ENCODE measurements at regions of chr11 and their contacts with region 1.

Region 1: GRCh38 chr11:130882138-130882551 is 34.1 kb downstream of the SNX19 start:
- DNase-seq: no peak
- H3K4me3 ChIP-seq: no peak overlapping the region
- H3K4me3 Mint-ChIP-seq: no peak overlapping the region
- H3K27ac ChIP-seq: no peak overlapping the region
- H3K27ac Mint-ChIP-seq: peak overlapping the region in 1 of 7 donors; percentile 82
- H3K4me1 ChIP-seq: no peaks in the 10 kb centered on the region
- H3K4me1 Mint-ChIP-seq: peaks cover 0 to 3% (median 0%) of the 10 kb centered on the region in 4 donors
- H3K27me3 ChIP-seq: no peaks in the 10 kb centered on the region
- H3K27me3 Mint-ChIP-seq: no peaks in the 10 kb centered on the region

Region 2: DNA sequence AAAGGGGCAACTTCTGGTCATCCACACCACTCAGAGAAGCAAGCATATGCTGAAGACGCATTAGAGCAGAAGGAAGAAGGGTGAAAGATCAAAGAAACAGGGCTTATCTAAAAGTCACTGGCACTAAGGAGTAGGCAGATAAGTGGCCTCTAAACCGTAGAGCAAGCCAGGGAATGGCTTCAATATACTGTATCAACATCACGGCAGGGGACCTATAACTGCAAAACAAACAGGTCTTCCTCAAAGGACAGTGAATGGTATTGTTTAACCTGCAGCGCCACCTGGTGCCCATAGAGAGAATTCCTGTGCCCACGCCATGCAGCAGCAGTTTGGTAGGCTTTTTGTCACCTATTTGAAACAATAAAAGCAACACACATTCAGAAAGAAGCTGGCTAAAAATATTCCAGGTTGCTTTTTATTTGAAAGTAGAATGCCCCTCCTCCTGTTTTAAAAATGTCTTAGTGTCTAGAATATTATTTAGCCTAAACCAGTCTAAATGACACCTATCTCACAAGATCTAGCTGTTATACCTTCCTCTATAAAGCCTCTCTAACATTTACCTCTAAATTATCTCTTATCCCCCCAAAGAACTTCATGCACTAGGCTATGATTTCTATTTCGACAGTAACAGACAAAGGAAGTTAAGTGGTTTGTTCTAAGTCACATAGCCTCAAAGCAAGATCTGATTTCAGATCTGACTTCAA is 12.3 kb after region 1 on chr11:
- CTCF ChIA-PET with region 1: interaction called, 19 read pairs
- POLR2A ChIA-PET with region 1: no interaction called
- intact Hi-C with region 1: no loop called
- DNase-seq: peak; percentile 43 to 60 (median 50)
- H3K4me3 ChIP-seq: no peak overlapping the region
- H3K4me3 Mint-ChIP-seq: no peak overlapping the region
- H3K27ac ChIP-seq: no peak overlapping the region
- H3K27ac Mint-ChIP-seq: peak overlapping the region in 2 of 7 donors; percentile 18 to 45
- H3K4me1 ChIP-seq: no peaks in the 10 kb centered on the region
- H3K4me1 Mint-ChIP-seq: peaks cover 8 to 11% (median 9%) of the 10 kb centered on the region in 4 donors
- H3K27me3 ChIP-seq: no peaks in the 10 kb centered on the region
- H3K27me3 Mint-ChIP-seq: no peaks in the 10 kb centered on the region

Region 3: DNA sequence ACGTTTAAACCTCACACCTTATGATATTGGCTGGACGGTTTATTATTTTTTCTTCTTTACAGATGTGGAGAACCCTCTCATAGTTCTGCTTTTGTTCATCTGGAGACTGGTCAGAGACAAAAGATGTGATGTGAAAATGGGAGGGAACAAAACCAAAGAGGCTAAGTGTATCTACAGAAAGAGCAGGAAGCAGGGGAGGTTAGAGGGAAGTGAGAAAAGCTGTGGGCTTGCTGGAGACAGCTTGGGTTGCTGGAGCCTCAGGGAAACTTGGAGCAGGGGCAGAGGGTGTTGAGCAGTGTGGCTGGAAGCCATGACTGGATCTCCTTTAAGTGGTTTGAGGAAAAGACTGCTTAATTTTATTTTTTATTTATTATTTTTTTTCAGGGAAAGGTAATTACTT is 113.1 kb after region 1 on chr11:
- CTCF ChIA-PET with region 1: no interaction called
- POLR2A ChIA-PET with region 1: no interaction called
- intact Hi-C with region 1: no loop called
- DNase-seq: no peak
- H3K4me3 ChIP-seq: no peak overlapping the region
- H3K4me3 Mint-ChIP-seq: no peak overlapping the region
- H3K27ac ChIP-seq: no peak overlapping the region
- H3K27ac Mint-ChIP-seq: no peak overlapping the region
- H3K4me1 ChIP-seq: no peaks in the 10 kb centered on the region
- H3K4me1 Mint-ChIP-seq: peaks cover 0 to 2% (median 0%) of the 10 kb centered on the region in 4 donors
- H3K27me3 ChIP-seq: no peaks in the 10 kb centered on the region
- H3K27me3 Mint-ChIP-seq: peaks cover 0 to 2% of the 10 kb centered on the region in 2 donors

Region 4: GRCh38 chr11:131674051-131674755 is 792.1 kb after region 1 on chr11:
- CTCF ChIA-PET with region 1: no interaction called
- POLR2A ChIA-PET with region 1: no interaction called
- intact Hi-C with region 1: no loop called
- DNase-seq: peak in 2 of 5 donors; percentile 6 to 9
- H3K4me3 ChIP-seq: no peak overlapping the region
- H3K4me3 Mint-ChIP-seq: no peak overlapping the region
- H3K27ac ChIP-seq: no peak overlapping the region
- H3K27ac Mint-ChIP-seq: no peak overlapping the region
- H3K4me1 ChIP-seq: no peaks in the 10 kb centered on the region
- H3K4me1 Mint-ChIP-seq: no peaks in the 10 kb centered on the region
- H3K27me3 ChIP-seq: no peaks in the 10 kb centered on the region
- H3K27me3 Mint-ChIP-seq: peaks cover 0 to 2% of the 10 kb centered on the region in 2 donors